Activated CD4-positive, alpha-beta memory T cell treated with anti-CD3 and anti-CD28 coated beads for 36 hours (primary cell): ENCODE measurements at regions of chrX and their contacts with region 1.

Region 1: GRCh38 chrX:3485727-3486126 is 139.3 kb upstream of the MXRA5 start:
- DNase-seq: no peak
- H3K4me3 Mint-ChIP-seq: no peak overlapping the region
- H3K27ac Mint-ChIP-seq: no peak overlapping the region
- H3K4me1 Mint-ChIP-seq: no peaks in the 10 kb centered on the region
- H3K27me3 Mint-ChIP-seq: no peaks in the 10 kb centered on the region

Region 2: DNA sequence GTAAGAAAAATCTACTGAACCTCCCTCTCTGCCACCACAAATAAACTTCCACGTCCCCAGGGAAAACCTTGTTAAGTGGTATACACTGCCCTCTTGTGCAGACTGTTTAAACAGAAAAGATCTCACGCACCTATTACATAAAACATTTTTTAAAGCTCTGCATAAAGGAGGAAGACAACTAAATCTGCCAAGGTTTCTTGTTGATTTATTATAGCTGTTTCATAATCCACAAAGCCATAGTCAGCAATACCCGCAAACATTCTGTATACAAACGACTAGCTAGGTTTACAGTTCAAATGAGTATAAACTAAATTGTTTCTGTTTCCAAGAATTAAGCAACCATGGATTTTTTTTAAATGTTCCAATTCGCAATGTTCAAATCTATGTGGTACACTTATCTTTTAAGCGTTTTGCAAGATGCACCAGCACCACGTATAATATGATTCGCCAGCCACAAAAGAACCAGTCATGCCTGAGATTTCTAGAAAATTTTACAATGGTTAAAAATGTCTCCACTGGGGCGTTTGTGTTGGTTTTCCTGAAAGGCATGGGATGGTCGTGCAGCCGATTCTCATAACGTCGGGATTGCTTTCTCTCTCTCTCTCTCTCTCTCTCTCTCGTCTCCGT is 63.2 kb after region 1 on chrX:
- CTCF ChIA-PET with region 1: no interaction called
- POLR2A ChIA-PET with region 1: no interaction called
- intact Hi-C with region 1: no loop called
- DNase-seq: no peak
- H3K4me3 Mint-ChIP-seq: no peak overlapping the region
- H3K27ac Mint-ChIP-seq: no peak overlapping the region
- H3K4me1 Mint-ChIP-seq: no peaks in the 10 kb centered on the region
- H3K27me3 Mint-ChIP-seq: peaks cover 4% of the 10 kb centered on the region

Region 3: GRCh38 chrX:3990569-3990968 is 504.8 kb after region 1 on chrX:
- CTCF ChIA-PET with region 1: no interaction called
- POLR2A ChIA-PET with region 1: no interaction called
- intact Hi-C with region 1: loop called (anchors 10 kb)
- DNase-seq: no peak
- H3K4me3 Mint-ChIP-seq: no peak overlapping the region
- H3K27ac Mint-ChIP-seq: no peak overlapping the region
- H3K4me1 Mint-ChIP-seq: no peaks in the 10 kb centered on the region
- H3K27me3 Mint-ChIP-seq: no peaks in the 10 kb centered on the region